Endothelial cell of umbilical vein (primary cell): ENCODE measurements at regions of chr7 and their contacts with region 1.

Region 1: DNA sequence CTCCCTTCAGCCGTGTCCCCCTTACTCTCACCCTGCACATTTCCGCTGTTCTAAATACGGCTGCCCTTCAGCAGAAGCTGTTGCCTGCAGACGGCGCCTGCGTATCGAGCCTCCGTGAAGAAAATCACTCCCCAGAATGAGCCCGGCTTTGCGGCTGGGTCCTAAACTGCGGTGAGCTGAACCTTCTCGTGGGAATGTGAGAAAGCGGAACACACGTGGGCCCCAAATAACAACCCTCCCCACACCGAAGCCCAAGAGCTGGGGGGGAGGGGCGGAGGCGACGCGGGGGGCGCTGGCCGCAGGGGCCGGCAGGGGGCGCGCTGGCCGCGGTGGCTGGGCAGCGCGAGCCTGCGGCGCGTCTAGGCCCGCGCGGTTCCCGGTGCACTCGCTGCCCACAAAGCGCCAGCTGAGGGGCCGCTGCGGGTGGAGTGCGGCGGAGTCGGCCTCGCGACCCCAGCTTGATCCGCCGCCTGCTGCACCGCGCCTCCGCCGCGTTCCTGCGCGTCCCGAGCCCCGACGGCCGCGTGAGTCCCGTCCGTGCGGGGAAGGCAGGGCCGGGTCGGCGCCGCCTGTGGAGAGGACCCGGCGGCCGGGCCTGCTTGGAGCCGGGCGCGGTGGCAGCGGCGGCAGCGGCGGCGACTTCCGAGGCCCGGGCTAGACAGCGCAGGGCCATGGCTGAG is at the start of gene ZNF398:
- DNase-seq: peak; percentile 75
- H3K4me3 ChIP-seq: peak within 1 kb of the TSS; percentile 74 to 98 (median 87)
- H3K27ac ChIP-seq: peak within 1 kb of the TSS; percentile 57
- H3K4me1 ChIP-seq: peaks cover 4% of the 10 kb centered on the region
- H3K27me3 ChIP-seq: no peaks in the 10 kb centered on the region
- CTCF ChIP-seq: peak; percentile 42 to 79
- POLR2A ChIP-seq: peak; percentile 63
- total RNA-seq, gene ZNF398: 8.6 and 10.6 TPM in 2 replicates

Region 2: GRCh38 chr7:149171892-149172533 is 24.8 kb after region 1 on chr7:
- CTCF ChIA-PET with region 1: interaction called, 7 read pairs
- POLR2A ChIA-PET with region 1: interaction called, 11 read pairs
- dilution Hi-C with region 1: no loop called
- intact Hi-C with region 1: no loop called
- DNase-seq: no peak
- H3K4me3 ChIP-seq: no peak overlapping the region
- H3K27ac ChIP-seq: no peak overlapping the region
- H3K4me1 ChIP-seq: peaks cover 7% of the 10 kb centered on the region
- H3K27me3 ChIP-seq: no peaks in the 10 kb centered on the region
- CTCF ChIP-seq: no peak
- POLR2A ChIP-seq: no peak